Sigmoid colon (tissue), 7 donors: ENCODE measurements at regions of chr10 and their contacts with region 1.

Region 1: GRCh38 chr10:102420810-102421644 is at the start of gene FBXL15:
- DNase-seq: peak; percentile 99
- H3K4me3 ChIP-seq: peak within 1 kb of the TSS; percentile 61 to 89 (median 76)
- H3K27ac ChIP-seq: peak within 1 kb of the TSS; percentile 86 to 96 (median 91)
- H3K4me1 ChIP-seq: peaks cover 0 to 42% (median 36%) of the 10 kb centered on the region in 4 donors
- H3K27me3 ChIP-seq: peaks cover 0 to 27% (median 6%) of the 10 kb centered on the region in 3 donors
- CTCF ChIP-seq: no peak
- EP300 ChIP-seq: peak in 1 of 4 donors; percentile 63
- POLR2A ChIP-seq: peak in 1 of 2 donors; percentile 33
- total RNA-seq, gene FBXL15: 19.7 to 51.3 (median 34.2) TPM

Region 2: DNA sequence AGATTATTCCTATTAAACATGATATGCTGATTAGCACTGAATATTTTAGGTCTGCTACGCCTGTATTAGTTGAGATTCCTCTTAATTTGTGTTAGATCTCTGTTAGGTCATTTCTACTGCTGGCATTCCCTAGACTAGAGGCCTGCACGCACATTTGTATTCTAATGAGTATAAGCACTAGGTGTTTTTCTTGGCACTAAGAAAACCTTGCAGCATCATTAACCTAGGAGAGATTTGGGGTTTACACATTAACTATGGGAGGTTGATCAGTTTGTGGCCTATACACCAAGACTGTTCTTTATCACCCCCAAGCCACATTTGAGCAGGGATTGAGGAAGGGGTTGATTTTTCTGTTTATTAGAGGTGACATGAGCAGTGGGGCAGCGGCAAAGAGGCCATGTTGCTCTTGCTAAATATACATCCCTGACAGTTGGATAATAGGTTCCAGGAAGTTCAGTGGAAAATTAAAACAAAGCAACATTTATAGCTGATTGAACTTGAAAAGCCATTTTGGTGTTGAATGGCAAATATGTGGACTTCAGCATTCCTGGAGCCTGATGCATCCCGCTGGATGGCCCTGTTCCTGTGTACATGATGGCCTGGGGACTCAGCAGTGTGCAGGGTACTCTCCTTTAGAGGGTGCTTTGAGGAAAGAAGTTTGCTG is 110.5 kb before region 1 on chr10:
- intact Hi-C with region 1: no loop called
- DNase-seq: no peak
- H3K4me3 ChIP-seq: no peak overlapping the region
- H3K27ac ChIP-seq: peak overlapping the region in 2 of 4 donors; percentile 21 to 32
- H3K4me1 ChIP-seq: peaks cover 0 to 54% (median 43%) of the 10 kb centered on the region in 4 donors
- H3K27me3 ChIP-seq: no peaks in the 10 kb centered on the region
- CTCF ChIP-seq: no peak
- EP300 ChIP-seq: no peak
- POLR2A ChIP-seq: no peak

Region 3: DNA sequence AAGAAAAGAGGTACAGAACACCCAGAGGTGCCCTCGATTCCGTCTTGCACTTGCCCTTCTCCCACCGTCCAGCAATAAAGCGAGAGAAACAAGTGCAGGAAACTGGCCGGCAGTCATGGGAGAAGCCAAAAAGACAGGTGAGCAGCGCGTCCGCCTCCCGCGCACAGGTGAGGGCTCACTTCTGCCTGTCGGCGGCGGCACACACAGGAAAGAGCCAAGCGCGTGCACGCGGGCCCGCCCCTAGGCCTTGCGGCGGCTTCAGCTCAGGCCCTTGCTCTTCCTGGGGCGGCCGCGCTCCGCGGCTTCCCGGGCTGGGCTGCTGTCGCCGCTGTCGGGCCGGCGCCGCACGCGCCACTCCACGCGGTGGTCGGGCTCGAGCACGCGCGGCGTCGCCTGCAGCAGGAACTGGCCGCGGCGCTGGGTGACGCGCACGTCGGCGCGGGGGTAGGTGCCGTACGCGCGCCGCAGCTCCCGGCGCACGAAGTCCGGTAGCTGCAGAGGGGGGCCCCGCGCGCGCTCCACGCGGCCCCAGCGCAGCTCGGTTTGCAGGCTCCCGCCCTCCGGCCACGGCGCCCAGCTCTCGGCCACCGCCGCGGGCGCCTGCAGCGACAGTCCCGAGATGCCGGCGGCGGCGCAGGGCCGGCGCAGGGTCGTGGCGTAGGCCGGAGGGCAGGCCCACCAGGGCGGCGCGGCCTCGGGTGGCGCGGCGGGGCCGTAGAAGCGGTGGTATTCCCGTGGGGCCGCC is 29.3 kb after region 1 on chr10:
- intact Hi-C with region 1: loop called (anchors 1 kb)
- DNase-seq: peak; percentile 88
- H3K4me3 ChIP-seq: peak overlapping the region; percentile 60 to 86 (median 70)
- H3K27ac ChIP-seq: peak overlapping the region; percentile 83 to 88 (median 84)
- H3K4me1 ChIP-seq: peaks cover 0 to 20% (median 17%) of the 10 kb centered on the region in 4 donors
- H3K27me3 ChIP-seq: no peaks in the 10 kb centered on the region
- CTCF ChIP-seq: no peak
- EP300 ChIP-seq: no peak
- POLR2A ChIP-seq: no peak

Region 4: GRCh38 chr10:102465466-102465865 is 44.4 kb after region 1 on chr10:
- intact Hi-C with region 1: no loop called
- DNase-seq: no peak
- H3K4me3 ChIP-seq: no peak overlapping the region
- H3K27ac ChIP-seq: no peak overlapping the region
- H3K4me1 ChIP-seq: peaks cover 0 to 22% (median 12%) of the 10 kb centered on the region in 4 donors
- H3K27me3 ChIP-seq: no peaks in the 10 kb centered on the region
- CTCF ChIP-seq: no peak
- EP300 ChIP-seq: no peak
- POLR2A ChIP-seq: no peak

Region 5: GRCh38 chr10:102476466-102477141 is 55.6 kb after region 1 on chr10:
- intact Hi-C with region 1: loop called (anchors 5 kb)
- DNase-seq: no peak
- H3K4me3 ChIP-seq: no peak overlapping the region
- H3K27ac ChIP-seq: peak overlapping the region in 3 of 4 donors; percentile 20 to 26 (median 20)
- H3K4me1 ChIP-seq: no peaks in the 10 kb centered on the region
- H3K27me3 ChIP-seq: no peaks in the 10 kb centered on the region
- CTCF ChIP-seq: no peak
- EP300 ChIP-seq: no peak
- POLR2A ChIP-seq: no peak

Region 6: GRCh38 chr10:102583435-102584417 is 162.7 kb after region 1 on chr10:
- intact Hi-C with region 1: loop called (anchors 5 kb)
- DNase-seq: peak; percentile 94
- H3K4me3 ChIP-seq: no peak overlapping the region
- H3K27ac ChIP-seq: peak overlapping the region in 1 of 4 donors; percentile 41
- H3K4me1 ChIP-seq: peaks cover 0 to 26% (median 15%) of the 10 kb centered on the region in 4 donors
- H3K27me3 ChIP-seq: no peaks in the 10 kb centered on the region
- CTCF ChIP-seq: peak; percentile 47 to 84 (median 78)
- EP300 ChIP-seq: no peak
- POLR2A ChIP-seq: no peak